ENCODE measurements at regions of chr16 and their contacts with region 1.

Region 1: GRCh38 chr16:50681021-50681885 is at the start of gene SNX20:
- DNase-seq: peak; percentile 54
- ATAC-seq: peak; percentile 63
- total RNA-seq, gene SNX20: 2.6 TPM

Region 2: GRCh38 chr16:48971571-48972077 is 1709.6 kb before region 1 on chr16:
- intact Hi-C with region 1: loop called (anchors 10 kb)
- DNase-seq: no peak
- ATAC-seq: no peak